IMR-90 (cell line): ENCODE measurements at regions of chrX and their contacts with region 1.

Region 1: DNA sequence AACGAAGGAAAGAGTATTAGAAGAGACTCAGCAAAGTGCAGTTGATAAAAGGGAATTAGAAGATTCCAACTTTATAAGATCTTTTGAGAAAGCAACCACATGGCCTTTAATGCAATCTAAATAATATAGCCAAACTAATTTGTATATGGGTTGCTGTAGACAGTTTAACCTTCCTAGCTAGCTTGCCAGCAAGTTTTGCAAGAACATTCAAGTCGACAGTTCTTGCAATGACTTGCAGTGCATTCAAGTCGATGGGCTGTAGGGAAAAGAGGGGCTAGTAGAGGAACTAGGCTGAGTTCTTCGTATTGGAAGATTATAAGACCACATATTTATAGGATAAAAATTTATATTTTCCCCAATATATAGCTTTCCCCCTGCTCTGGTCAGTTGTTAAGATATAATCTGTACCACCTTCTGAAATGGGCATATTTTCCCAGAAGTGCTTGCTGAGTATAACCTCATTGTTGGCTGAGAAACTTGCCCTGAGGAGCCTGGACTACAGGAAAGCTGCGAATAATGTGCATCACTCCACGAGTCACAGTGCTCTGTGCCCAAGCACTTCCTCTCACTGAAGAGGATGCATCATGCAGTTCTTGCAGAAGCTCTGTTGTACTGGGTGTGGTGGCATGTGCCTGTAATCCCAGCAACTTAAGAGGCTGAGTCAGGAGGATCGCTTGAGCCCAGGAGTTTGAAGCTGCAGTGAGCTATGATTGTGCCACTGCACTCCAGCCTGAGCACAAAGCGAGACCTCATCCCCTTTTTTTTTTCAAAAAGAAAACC is 56.7 kb downstream of the DOCK11 start:
- DNase-seq: peak; percentile 71
- ATAC-seq: peak; percentile 59
- H3K4me3 ChIP-seq: no peak overlapping the region
- H3K27ac ChIP-seq: no peak overlapping the region
- H3K4me1 ChIP-seq: no peaks in the 10 kb centered on the region
- H3K27me3 ChIP-seq: no peaks in the 10 kb centered on the region; the same call in 1 of the 2 replicates
- CTCF ChIP-seq: no peak
- POLR2A ChIP-seq: no peak
- RAD21 ChIP-seq: no peak

Region 2: GRCh38 chrX:118528071-118528737 is 24.1 kb before region 1 on chrX:
- CTCF ChIA-PET with region 1: no interaction called
- POLR2A ChIA-PET with region 1: interaction called, 11 read pairs
- dilution Hi-C with region 1: no loop called
- in situ Hi-C with region 1: no loop called
- intact Hi-C with region 1: no loop called
- DNase-seq: no peak
- ATAC-seq: no peak
- H3K4me3 ChIP-seq: no peak overlapping the region
- H3K27ac ChIP-seq: no peak overlapping the region
- H3K4me1 ChIP-seq: peaks cover 5% of the 10 kb centered on the region
- H3K27me3 ChIP-seq: no peaks in the 10 kb centered on the region
- CTCF ChIP-seq: no peak
- POLR2A ChIP-seq: no peak
- RAD21 ChIP-seq: no peak

Region 3: GRCh38 chrX:118655561-118656246 is 103.4 kb after region 1 on chrX:
- CTCF ChIA-PET with region 1: no interaction called
- POLR2A ChIA-PET with region 1: no interaction called
- dilution Hi-C with region 1: no loop called
- in situ Hi-C with region 1: no loop called
- intact Hi-C with region 1: no loop called
- DNase-seq: peak; percentile 65
- ATAC-seq: peak; percentile 92
- H3K4me3 ChIP-seq: no peak overlapping the region
- H3K27ac ChIP-seq: no peak overlapping the region
- H3K4me1 ChIP-seq: no peaks in the 10 kb centered on the region
- H3K27me3 ChIP-seq: no peaks in the 10 kb centered on the region
- CTCF ChIP-seq: no peak
- POLR2A ChIP-seq: no peak
- RAD21 ChIP-seq: no peak